BJ (cell line): ENCODE measurements at regions of chr5 and their contacts with region 1.

Region 1: GRCh38 chr5:171221941-171222340 is 87.1 kb upstream of the TLX3 start:
- DNase-seq: peak; percentile 15
- H3K4me3 ChIP-seq: no peak overlapping the region
- H3K27me3 ChIP-seq: no peaks in the 10 kb centered on the region
- CTCF ChIP-seq: no peak

Region 2: GRCh38 chr5:171207256-171207847 is 14.6 kb before region 1 on chr5:
- CTCF ChIA-PET with region 1: interaction called, 18 read pairs
- POLR2A ChIA-PET with region 1: no interaction called
- DNase-seq: peak; percentile 13
- H3K4me3 ChIP-seq: no peak overlapping the region
- H3K27me3 ChIP-seq: no peaks in the 10 kb centered on the region
- CTCF ChIP-seq: peak; percentile 59